B cell (primary cell): ENCODE measurements at regions of chr10 and their contacts with region 1.

Region 1: GRCh38 chr10:63720072-63720537 is 198.9 kb downstream of the REEP3 start:
- DNase-seq: peak; percentile 76
- ATAC-seq: peak; percentile 94
- H3K4me3 ChIP-seq: no peak overlapping the region
- H3K4me3 Mint-ChIP-seq: no peak overlapping the region
- H3K27ac ChIP-seq: no peak overlapping the region
- H3K27ac Mint-ChIP-seq: no peak overlapping the region
- H3K4me1 ChIP-seq: no peaks in the 10 kb centered on the region
- H3K4me1 Mint-ChIP-seq: peaks cover 7% of the 10 kb centered on the region
- H3K27me3 ChIP-seq: peaks cover 0 to 13% (median 2%) of the 10 kb centered on the region in 4 experiments
- H3K27me3 Mint-ChIP-seq: peaks cover 13% of the 10 kb centered on the region
- CTCF ChIP-seq: peak; percentile 100

Region 2: DNA sequence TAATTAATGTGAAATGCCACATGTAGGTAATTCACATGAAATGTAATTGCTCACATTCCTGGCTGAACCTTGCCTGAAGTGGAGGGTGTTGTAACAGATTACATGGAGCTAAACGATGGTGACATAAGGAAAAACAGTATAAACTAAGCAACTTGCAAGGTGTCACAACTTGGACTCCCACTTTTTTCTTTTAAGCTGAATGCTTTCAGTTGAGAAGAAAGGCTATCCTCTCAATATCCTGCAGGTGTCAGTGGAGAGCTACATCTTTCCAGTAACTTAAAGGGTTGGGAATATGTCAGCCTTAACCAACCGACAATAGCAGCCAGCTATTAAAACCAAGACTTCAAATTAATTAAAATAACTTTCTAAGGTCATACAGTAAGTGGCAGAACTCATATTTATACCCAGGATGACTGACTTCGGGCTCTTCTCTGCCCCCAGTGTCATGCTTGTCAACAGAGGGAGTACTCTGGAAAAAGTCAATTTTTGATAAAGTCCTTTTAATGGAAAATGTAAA is 553.3 kb before region 1 on chr10:
- CTCF ChIA-PET with region 1: interaction called, 453 read pairs
- POLR2A ChIA-PET with region 1: no interaction called
- intact Hi-C with region 1: loop called (anchors 1 kb)
- DNase-seq: peak; percentile 74
- ATAC-seq: peak; percentile 84
- H3K4me3 ChIP-seq: no peak overlapping the region
- H3K4me3 Mint-ChIP-seq: no peak overlapping the region
- H3K27ac ChIP-seq: no peak overlapping the region
- H3K27ac Mint-ChIP-seq: no peak overlapping the region
- H3K4me1 ChIP-seq: no peaks in the 10 kb centered on the region
- H3K4me1 Mint-ChIP-seq: peaks cover 2% of the 10 kb centered on the region
- H3K27me3 ChIP-seq: no peaks in the 10 kb centered on the region
- H3K27me3 Mint-ChIP-seq: no peaks in the 10 kb centered on the region
- CTCF ChIP-seq: peak; percentile 83

Region 3: GRCh38 chr10:63206997-63207811 is 512.9 kb before region 1 on chr10:
- CTCF ChIA-PET with region 1: interaction called, 12 read pairs
- POLR2A ChIA-PET with region 1: no interaction called
- intact Hi-C with region 1: no loop called
- DNase-seq: no peak
- ATAC-seq: peak; percentile 61
- H3K4me3 ChIP-seq: no peak overlapping the region
- H3K4me3 Mint-ChIP-seq: peak overlapping the region; percentile 64
- H3K27ac ChIP-seq: peak overlapping the region in 1 of 2 donors; percentile 39
- H3K27ac Mint-ChIP-seq: peak overlapping the region; percentile 76
- H3K4me1 ChIP-seq: peaks cover 29 to 30% of the 10 kb centered on the region in 2 donors
- H3K4me1 Mint-ChIP-seq: peaks cover 59% of the 10 kb centered on the region
- H3K27me3 ChIP-seq: no peaks in the 10 kb centered on the region
- H3K27me3 Mint-ChIP-seq: no peaks in the 10 kb centered on the region
- CTCF ChIP-seq: no peak

Region 4: DNA sequence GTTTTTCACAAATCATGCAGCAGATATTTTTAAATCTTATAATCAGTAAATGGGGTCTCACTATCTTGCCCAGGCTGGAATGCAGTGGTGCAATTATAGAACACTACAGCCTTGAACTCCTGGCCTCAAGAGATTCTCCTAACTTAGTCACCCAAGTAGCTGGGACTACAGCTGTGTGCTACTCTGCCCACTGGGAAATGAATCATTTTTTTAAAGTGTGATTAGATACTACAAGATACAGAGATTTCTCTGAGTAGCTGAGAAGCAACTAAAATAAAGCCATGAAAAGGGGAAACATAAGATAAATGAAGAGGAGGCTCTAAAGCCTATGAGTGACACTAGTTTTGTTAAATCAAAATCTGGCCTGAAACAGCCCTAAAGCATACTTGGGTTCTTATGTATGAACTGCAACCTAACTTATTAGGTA is 374.1 kb before region 1 on chr10:
- CTCF ChIA-PET with region 1: no interaction called
- POLR2A ChIA-PET with region 1: no interaction called
- intact Hi-C with region 1: no loop called
- DNase-seq: no peak
- ATAC-seq: no peak
- H3K4me3 ChIP-seq: no peak overlapping the region
- H3K4me3 Mint-ChIP-seq: no peak overlapping the region
- H3K27ac ChIP-seq: no peak overlapping the region
- H3K27ac Mint-ChIP-seq: no peak overlapping the region
- H3K4me1 ChIP-seq: no peaks in the 10 kb centered on the region
- H3K4me1 Mint-ChIP-seq: peaks cover 6% of the 10 kb centered on the region
- H3K27me3 ChIP-seq: no peaks in the 10 kb centered on the region
- H3K27me3 Mint-ChIP-seq: no peaks in the 10 kb centered on the region
- CTCF ChIP-seq: no peak

Region 5: DNA sequence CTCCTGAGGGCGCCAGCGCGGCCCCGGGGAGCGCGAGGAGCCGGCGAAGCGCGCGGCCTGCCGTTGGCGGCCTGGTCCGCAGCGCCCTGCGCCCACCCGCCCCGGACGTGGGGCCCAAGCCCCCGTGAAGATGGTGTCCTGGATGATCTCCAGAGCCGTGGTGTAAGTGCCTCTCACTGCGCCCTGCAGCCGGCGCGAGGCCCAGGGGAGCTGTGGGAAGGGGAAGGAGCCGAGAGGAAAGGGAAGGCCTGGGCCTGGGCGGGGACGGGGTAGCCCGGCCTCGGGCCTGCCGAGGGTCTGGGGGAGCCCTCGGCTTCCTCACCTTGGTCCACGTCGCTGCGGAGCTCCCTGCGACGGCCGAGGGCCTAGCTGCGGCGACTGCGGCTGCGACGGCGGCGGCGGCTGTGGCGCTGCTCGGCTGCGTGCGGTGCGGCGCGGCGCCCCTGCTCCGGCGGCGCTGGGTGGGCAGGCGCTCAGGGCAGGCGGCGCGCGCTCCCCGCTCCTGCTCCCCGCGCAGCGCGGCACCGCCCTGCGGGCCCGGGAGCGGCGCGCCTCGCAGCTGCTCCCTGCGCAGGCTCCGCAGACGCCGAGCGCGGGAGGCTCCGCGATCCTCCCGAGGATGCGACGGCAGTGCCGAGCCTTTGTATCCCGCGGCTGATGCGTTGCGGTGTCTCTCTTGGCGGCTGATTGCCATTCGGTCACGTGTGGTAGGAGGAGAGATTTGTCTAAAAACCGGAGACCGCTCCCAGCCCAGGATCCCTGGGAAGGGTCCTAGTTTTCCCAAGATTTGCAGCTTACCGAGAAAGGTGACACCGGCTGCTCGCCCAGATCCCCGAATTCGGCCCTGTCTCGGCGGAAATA is 198.5 kb before region 1 on chr10:
- CTCF ChIA-PET with region 1: interaction called, 12 read pairs
- POLR2A ChIA-PET with region 1: interaction called, 6 read pairs
- intact Hi-C with region 1: loop called (anchors 2 kb)
- DNase-seq: peak; percentile 91
- ATAC-seq: peak; percentile 62
- H3K4me3 ChIP-seq: peak overlapping the region; percentile 46 to 89 (median 82)
- H3K4me3 Mint-ChIP-seq: peak overlapping the region; percentile 91
- H3K27ac ChIP-seq: peak overlapping the region; percentile 75 to 79
- H3K27ac Mint-ChIP-seq: peak overlapping the region; percentile 89
- H3K4me1 ChIP-seq: peaks cover 6 to 17% of the 10 kb centered on the region in 2 donors
- H3K4me1 Mint-ChIP-seq: peaks cover 39% of the 10 kb centered on the region
- H3K27me3 ChIP-seq: no peaks in the 10 kb centered on the region
- H3K27me3 Mint-ChIP-seq: no peaks in the 10 kb centered on the region
- CTCF ChIP-seq: no peak

Region 6: GRCh38 chr10:63707254-63707910 is 12.7 kb before region 1 on chr10:
- CTCF ChIA-PET with region 1: interaction called, 17 read pairs
- POLR2A ChIA-PET with region 1: no interaction called
- intact Hi-C with region 1: no loop called
- DNase-seq: no peak
- ATAC-seq: peak; percentile 47
- H3K4me3 ChIP-seq: no peak overlapping the region
- H3K4me3 Mint-ChIP-seq: no peak overlapping the region
- H3K27ac ChIP-seq: no peak overlapping the region
- H3K27ac Mint-ChIP-seq: peak overlapping the region; percentile 16
- H3K4me1 ChIP-seq: peaks cover 23 to 28% of the 10 kb centered on the region in 2 donors
- H3K4me1 Mint-ChIP-seq: peaks cover 38% of the 10 kb centered on the region
- H3K27me3 ChIP-seq: no peaks in the 10 kb centered on the region
- H3K27me3 Mint-ChIP-seq: no peaks in the 10 kb centered on the region
- CTCF ChIP-seq: no peak